Panc1 (cell line): ENCODE measurements at regions of chr1 and their contacts with region 1.

Region 1: DNA sequence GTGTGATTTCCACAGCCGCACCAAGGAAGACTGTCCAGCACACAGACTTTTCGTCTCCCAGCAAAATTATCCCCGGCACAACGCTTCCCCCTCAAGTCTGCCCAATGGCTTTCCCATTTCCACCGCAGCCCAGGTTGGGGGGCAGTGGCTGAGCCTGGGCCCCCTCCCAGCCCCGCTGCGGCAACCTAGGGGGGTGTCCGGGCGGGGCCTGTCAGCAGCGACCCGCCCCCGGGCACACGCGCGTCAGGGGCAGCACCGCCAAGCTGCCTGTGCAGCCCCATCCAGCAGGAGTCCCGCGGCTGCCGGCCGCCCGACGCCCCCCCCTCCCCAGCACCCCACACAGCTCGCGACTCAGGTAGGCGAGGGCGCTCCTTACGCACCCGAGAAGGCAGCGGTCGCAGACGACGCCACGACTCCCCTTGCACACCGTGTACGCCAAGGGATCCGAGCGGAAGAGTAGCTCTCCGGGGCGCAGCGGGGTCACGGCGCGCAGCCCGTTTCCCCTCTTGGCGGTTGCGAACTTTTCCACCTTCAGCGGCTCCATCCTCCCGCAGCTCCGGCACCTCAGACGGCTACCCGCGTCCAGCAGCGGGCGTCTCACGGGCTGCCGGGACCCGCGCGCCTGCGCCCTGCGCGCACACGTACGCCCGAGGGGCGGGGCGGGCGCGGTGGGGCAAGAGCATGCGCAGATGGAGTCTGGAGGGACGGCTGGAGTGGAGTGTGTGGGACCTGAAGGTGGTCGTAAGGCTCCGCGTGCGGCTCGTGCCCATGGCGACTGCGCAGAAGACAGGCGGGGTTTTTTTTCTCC is at the start of gene SMYD3:
- DNase-seq: no peak
- ATAC-seq: peak; percentile 92
- H3K4me3 ChIP-seq: peak within 1 kb of the TSS; percentile 68 to 77
- H3K27ac ChIP-seq: peak within 1 kb of the TSS; percentile 54
- H3K4me1 ChIP-seq: peaks cover 6% of the 10 kb centered on the region
- H3K27me3 ChIP-seq: no peaks in the 10 kb centered on the region
- CTCF ChIP-seq: no peak; the same call in 1 of the 2 replicates
- total RNA-seq, gene SMYD3: 17.4 TPM

Region 2: DNA sequence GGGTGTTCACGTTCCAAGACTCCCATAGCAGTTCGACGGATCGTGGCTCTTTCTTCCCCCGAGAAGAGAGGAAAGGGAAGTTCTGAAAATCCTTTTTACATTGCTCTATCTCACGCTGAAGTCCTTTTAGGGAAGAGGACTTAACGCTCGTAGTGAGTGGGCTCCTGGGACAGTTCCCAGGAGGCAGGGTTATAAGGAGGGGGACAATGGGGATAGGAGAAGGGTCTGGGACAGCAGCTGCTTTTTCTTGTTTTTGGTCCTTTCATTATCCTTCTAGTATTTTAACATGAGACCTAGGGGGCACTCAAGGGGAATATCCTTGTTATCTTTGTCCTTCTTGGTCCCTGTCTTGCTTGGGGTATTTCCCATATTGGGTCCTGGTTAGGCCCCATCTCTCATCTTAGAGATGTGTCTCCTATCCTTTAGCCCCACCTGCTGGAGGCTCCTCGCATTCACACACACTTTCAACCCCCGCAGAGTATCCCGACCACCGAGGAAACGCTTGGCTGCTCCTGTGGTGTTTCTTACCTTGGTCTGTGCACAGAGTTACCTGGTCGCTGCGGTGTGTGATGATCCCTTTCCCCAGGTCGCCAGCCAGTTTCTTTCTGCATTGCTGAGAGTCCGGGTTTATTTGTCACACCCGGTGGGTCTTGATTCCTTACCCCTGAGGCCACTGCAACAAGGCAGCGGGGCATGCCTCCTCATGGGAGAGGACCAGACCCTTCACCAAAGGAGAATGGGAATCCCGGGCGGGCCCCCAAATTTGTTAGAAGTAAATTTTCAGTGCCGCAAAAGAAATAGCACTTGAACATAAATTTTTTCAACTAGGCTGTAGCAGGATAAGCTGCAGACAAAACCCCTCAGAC is 247.0 kb after region 1 on chr1:
- CTCF ChIA-PET with region 1: no interaction called
- POLR2A ChIA-PET with region 1: no interaction called
- in situ Hi-C with region 1: no loop called
- intact Hi-C with region 1: loop called (anchors 5 kb)
- DNase-seq: peak; percentile 27
- ATAC-seq: peak; percentile 94
- H3K4me3 ChIP-seq: no peak overlapping the region
- H3K27ac ChIP-seq: no peak overlapping the region
- H3K4me1 ChIP-seq: 0 out of 2 replicates have a peak, but pooled peaks cover 2% of the 10 kb centered on the region
- H3K27me3 ChIP-seq: no peaks in the 10 kb centered on the region
- CTCF ChIP-seq: peak; percentile 87